Activated naive CD8-positive, alpha-beta T cell treated with anti-CD3 and anti-CD28 coated beads, Interleukin-2, amount 10 ng/mL, durations not matched to agents 7 days and 5 days (primary cell): ENCODE measurements at regions of chr11 and their contacts with region 1.

Region 1: DNA sequence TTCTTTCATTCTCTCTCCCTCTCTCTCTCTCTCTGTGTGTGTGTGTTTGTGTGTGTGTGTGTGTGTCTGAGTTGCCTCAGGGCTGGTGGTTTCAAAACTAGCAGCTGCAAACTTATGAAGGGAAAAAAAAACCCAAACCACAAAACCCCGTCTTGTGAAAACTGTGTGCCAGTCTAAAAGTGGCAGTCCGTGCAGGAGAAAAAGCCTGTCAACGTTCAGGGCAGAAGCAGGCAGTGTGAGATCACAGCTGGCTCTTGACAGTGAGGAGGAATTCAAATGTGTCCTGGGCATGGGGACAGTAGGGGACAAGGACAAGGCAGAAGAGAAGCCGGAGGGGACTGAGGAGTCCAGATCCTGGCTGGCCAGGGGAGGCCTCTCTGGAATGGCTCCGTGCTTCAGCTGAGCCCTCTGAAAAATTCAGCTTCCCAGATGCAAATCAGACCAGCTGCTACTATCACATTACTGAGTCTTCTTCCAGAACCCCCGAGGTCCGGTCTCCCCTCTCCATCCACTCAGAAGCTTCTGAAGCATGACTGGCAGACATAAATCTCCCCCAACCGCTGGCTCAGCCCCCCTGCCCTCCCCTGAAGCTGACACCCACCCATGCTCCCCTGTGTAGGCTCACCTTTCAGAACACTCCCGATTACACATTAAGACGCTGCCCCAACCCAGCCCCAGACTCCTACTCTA is 31.9 kb downstream of the FLI1 start:
- DNase-seq: no peak
- ATAC-seq: peak; percentile 28
- H3K4me3 Mint-ChIP-seq: peak overlapping the region; percentile 70
- H3K27ac Mint-ChIP-seq: peak overlapping the region; percentile 88
- H3K4me1 Mint-ChIP-seq: peaks cover 90% of the 10 kb centered on the region
- H3K27me3 Mint-ChIP-seq: no peaks in the 10 kb centered on the region

Region 2: GRCh38 chr11:128624269-128625175 is 101.3 kb before region 1 on chr11:
- POLR2A ChIA-PET with region 1: no interaction called
- DNase-seq: peak; percentile 72
- ATAC-seq: peak; percentile 65
- H3K4me3 Mint-ChIP-seq: peak overlapping the region; percentile 77
- H3K27ac Mint-ChIP-seq: peak overlapping the region; percentile 92
- H3K4me1 Mint-ChIP-seq: peaks cover 69% of the 10 kb centered on the region
- H3K27me3 Mint-ChIP-seq: no peaks in the 10 kb centered on the region

Region 3: DNA sequence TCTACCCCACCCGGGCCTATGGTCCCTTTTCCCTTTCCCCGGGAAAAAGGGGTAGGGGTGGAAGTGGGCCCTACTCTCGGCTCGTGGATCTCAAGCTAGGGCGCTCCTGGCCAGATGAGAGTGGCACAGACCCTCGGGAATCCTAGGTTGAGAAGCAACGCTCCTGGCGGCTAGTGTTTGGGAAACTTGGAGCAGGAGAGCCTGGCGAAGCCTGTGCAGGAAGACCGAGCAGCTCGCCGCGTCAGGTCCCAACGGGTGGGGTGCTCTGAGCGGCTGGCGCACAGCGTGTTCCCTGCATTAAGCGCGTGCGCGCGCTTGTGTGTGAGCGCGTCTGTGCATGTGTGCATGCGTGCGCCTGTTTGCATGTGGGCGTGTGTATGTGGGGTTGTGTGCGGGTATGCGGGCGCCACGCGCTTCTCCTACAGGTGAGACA is 39.0 kb before region 1 on chr11:
- POLR2A ChIA-PET with region 1: no interaction called
- DNase-seq: peak; percentile 63
- ATAC-seq: peak; percentile 71
- H3K4me3 Mint-ChIP-seq: peak overlapping the region; percentile 81
- H3K27ac Mint-ChIP-seq: no peak overlapping the region
- H3K4me1 Mint-ChIP-seq: peaks cover 39% of the 10 kb centered on the region
- H3K27me3 Mint-ChIP-seq: peaks cover 64% of the 10 kb centered on the region

Region 4: DNA sequence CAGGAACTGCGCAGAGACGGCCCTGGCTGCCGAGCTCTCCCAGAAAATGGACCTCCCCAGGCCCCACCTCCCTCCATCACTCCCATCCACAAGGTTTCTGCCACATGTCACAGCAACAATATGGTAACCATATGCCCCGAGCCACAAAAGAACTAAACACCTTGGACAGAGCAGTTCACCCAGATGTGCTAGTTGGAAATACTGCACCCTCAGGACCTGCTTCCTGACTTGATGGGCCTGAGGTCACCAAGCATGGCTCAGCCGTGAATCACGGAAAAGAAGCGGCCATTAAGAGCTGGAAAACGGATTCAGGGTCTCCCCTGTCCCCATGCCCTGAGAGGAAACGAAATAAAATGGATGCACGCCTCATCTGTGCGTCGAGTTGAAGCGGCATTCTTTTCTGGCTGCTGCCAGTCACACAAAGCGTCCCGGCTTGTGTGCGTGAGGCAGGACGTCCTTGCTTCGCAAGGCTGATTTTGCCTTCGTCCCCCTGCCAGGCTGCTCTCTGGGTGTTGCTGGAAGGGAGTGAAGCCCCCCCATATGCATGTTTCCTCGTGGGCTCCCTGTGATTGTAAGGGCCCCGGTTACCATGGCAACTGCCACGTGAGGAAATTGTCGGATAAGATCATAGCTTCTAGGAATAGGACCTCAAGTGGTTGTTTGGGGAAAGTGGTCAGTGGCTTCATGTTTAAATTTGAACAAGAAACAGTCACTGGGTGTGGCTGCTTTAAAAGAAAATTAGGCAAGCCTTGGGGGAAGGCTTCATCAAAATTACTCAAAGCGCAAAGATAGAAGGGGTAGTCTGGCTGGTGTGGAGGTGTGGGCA is 19.7 kb after region 1 on chr11:
- POLR2A ChIA-PET with region 1: interaction called, 11 read pairs
- DNase-seq: no peak
- ATAC-seq: no peak
- H3K4me3 Mint-ChIP-seq: peak overlapping the region; percentile 5
- H3K27ac Mint-ChIP-seq: peak overlapping the region; percentile 45
- H3K4me1 Mint-ChIP-seq: peaks cover 47% of the 10 kb centered on the region
- H3K27me3 Mint-ChIP-seq: no peaks in the 10 kb centered on the region

Region 5: DNA sequence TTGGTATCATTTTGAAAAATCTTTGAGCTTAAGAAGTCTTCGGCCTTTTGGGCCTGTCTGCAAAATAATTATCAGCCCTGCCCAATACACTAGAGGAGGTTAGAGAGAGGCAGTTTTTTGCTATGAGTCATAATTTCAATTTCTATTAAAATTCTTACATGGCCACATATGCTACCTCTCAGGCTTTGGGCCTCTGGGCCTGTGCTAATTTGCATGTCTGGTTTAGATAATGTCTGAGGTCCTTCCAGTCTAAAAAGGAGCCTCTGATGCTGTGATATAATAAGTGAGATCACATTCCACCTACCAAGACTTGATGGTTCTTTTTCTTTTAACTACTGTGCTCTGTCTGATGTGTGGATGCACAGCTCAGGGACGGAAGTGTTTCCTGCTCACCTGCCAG is 70.5 kb after region 1 on chr11:
- POLR2A ChIA-PET with region 1: no interaction called
- DNase-seq: no peak
- ATAC-seq: no peak
- H3K4me3 Mint-ChIP-seq: no peak overlapping the region
- H3K27ac Mint-ChIP-seq: no peak overlapping the region
- H3K4me1 Mint-ChIP-seq: peaks cover 3% of the 10 kb centered on the region
- H3K27me3 Mint-ChIP-seq: no peaks in the 10 kb centered on the region

Region 6: DNA sequence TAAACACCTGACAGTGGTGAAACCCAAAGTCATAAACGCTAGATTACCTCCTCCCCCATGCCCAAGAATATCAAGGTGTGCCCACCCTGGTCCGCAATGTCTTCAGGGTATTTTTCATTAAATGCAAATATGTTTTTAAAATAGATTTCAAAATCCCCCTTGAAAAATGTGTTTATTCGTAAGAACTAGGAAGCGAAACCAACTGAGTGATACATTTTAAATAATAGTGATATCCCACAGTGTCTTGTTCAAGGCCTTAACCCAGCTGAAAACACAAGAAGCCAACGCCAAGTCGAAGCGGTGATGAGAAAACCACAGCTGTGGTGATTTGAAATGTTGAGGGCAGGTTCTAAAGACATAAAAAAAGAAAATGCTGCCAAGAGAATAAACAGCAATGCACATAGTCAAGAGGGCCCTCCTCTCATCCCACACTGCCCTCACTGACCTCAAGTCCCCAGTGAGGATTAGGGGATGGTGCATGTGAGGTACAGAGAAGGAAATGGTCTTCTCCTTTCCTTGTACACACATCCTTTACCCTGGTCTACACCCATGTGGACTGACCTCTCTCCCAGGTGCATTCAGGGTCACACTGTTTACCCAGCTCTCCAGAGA is 115.8 kb after region 1 on chr11:
- POLR2A ChIA-PET with region 1: no interaction called
- DNase-seq: no peak
- ATAC-seq: peak; percentile 4
- H3K4me3 Mint-ChIP-seq: no peak overlapping the region
- H3K27ac Mint-ChIP-seq: no peak overlapping the region
- H3K4me1 Mint-ChIP-seq: peaks cover 25% of the 10 kb centered on the region
- H3K27me3 Mint-ChIP-seq: no peaks in the 10 kb centered on the region